ENCODE measurements at regions of chr2 and their contacts with region 1.

Region 1: DNA sequence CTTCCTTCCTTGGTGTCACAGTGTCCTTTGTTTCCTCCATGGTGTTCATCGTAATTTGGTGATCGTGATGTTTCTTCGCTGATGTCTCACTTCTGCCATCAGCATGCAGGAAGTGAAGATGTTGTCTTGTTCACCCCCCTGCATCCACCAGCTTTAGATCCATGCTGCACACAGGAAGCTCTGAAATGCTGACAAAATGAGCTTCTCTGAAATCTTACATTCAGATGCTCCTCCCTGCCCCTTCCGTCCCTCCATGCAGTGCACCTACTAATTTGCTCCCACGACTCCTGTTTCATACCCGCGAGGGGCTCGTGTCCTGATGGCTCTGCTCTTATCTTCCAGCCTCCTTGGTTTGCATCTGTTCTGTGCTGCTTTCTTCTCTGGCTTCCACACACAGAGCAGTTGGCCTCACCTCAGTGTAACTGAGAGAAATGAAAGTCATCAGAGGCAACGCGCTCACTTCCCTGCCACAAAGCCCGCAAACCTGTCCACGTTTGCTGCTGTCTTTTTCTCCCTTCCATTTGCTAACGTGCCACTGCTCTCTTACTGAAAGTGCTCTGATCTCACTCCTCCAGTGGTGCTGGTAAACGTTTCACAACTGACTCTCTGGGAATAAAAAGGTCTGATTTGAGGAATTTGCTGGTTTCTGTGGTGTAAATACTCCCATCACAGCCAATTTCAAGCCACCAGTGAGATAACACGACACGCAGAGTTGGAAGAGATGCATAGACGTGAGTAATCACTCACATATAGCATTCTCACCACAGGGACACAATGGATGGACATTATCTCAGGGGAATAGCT is 41.0 kb upstream of the MGAT4A start:
- DNase-seq: peak; percentile 82 to 92 (median 89)
- H3K4me3 ChIP-seq: peak overlapping the region; percentile 31 to 57
- H3K4me3 Mint-ChIP-seq: peak overlapping the region; percentile 92 to 99 (median 94)
- H3K27ac ChIP-seq: peak overlapping the region; percentile 63
- H3K27ac Mint-ChIP-seq: peak overlapping the region; percentile 89 to 100 (median 98)
- H3K4me1 ChIP-seq: peaks cover 79% of the 10 kb centered on the region
- H3K4me1 Mint-ChIP-seq: peaks cover 60 to 93% (median 76%) of the 10 kb centered on the region in 4 donors
- H3K27me3 ChIP-seq: no peaks in the 10 kb centered on the region
- H3K27me3 Mint-ChIP-seq: no peaks in the 10 kb centered on the region

Region 2: DNA sequence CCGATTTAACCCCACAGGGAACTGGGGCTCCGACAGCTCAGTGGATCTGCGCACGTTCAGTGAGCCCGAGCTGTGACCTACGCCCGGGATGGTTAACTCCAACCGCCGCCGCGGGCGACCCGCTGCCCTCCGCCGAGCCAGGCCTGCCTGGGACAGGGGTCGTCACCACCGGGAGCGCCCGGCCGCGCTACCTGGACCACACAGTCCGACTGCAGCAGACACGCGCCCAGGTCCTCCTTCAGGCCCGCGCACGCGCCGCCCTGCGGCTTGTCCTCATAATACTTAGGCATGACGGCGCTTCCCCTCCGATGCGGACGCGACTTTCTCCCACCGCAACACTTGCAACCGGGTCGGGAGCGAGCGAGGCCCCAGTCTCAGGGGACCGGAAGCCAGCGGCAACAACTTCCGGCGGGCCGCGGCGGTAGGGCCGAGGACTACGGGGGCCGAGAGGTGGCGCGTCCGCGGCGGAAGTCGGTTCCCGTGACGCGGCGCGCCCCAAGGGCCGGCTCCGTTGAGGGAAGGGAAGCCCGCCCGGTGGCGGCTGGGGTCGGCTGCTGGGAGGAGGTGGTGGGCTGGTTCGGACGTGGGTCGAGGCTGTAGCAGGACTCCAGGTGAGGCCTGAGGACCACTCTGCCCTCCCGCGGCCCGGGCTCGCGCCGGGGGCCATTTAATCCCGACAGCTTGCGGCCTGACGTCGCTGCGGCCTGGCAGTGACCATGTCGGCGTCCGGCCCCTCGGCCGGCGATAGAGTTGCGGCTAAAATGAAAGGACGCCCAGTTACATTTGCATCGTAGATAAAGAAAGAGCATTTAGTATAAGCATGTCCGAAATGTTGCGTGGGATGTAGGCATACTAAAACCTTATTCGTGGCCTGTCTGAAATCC is 163.6 kb before region 1 on chr2 and contains the starts of genes COA5 and UNC50:
- CTCF ChIA-PET with region 1: no interaction called
- POLR2A ChIA-PET with region 1: interaction called, 8 read pairs
- intact Hi-C with region 1: loop called (anchors 1 kb)
- DNase-seq: peak; percentile 87 to 91 (median 88)
- H3K4me3 ChIP-seq: peak within 1 kb of the TSS; percentile 86 to 93
- H3K4me3 Mint-ChIP-seq: peak within 1 kb of the TSS; percentile 79 to 95 (median 89)
- H3K27ac ChIP-seq: peak within 1 kb of the TSS; percentile 88
- H3K27ac Mint-ChIP-seq: peak within 1 kb of the TSS; percentile 89 to 97 (median 91)
- H3K4me1 ChIP-seq: peaks cover 61% of the 10 kb centered on the region
- H3K4me1 Mint-ChIP-seq: peaks cover 51 to 91% (median 59%) of the 10 kb centered on the region in 4 donors
- H3K27me3 ChIP-seq: no peaks in the 10 kb centered on the region
- H3K27me3 Mint-ChIP-seq: no peaks in the 10 kb centered on the region
- total RNA-seq, gene COA5: 51.3 to 52.4 TPM
- total RNA-seq, gene UNC50: 43.5 to 47.2 TPM

Region 3: GRCh38 chr2:98664327-98664726 is 107.6 kb before region 1 on chr2:
- CTCF ChIA-PET with region 1: interaction called, 7 read pairs
- POLR2A ChIA-PET with region 1: interaction called, 173 read pairs
- intact Hi-C with region 1: loop called (anchors 1 kb)
- DNase-seq: peak; percentile 71 to 81 (median 78)
- H3K4me3 ChIP-seq: peak overlapping the region in 1 of 2 donors; percentile 54
- H3K4me3 Mint-ChIP-seq: peak overlapping the region; percentile 59 to 91 (median 84)
- H3K27ac ChIP-seq: peak overlapping the region; percentile 51
- H3K27ac Mint-ChIP-seq: peak overlapping the region; percentile 85 to 99 (median 92)
- H3K4me1 ChIP-seq: peaks cover 74% of the 10 kb centered on the region
- H3K4me1 Mint-ChIP-seq: peaks cover 52 to 91% (median 69%) of the 10 kb centered on the region in 4 donors
- H3K27me3 ChIP-seq: no peaks in the 10 kb centered on the region
- H3K27me3 Mint-ChIP-seq: no peaks in the 10 kb centered on the region

Region 4: DNA sequence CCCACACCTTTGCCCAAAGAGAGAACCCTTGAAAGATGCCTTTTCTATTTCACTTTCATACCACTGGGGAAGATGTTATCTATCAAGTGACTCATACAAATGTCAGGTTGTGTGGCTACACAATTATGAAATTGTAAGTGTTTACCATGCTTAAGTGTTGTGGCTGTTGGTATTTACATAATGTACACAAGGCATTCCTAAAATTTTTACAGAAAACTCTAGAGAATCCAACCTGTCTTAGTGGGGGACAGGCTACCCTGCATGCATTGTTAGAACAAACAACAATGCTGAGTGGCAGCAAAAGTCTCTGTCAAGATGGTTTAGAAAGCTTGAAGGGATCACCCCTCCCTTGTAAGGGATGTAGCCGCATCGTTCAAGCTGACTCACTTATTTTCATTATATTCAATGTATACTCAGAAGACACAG is 35.4 kb before region 1 on chr2:
- CTCF ChIA-PET with region 1: interaction called, 51 read pairs
- POLR2A ChIA-PET with region 1: interaction called, 565 read pairs
- intact Hi-C with region 1: loop called (anchors 1 kb)
- DNase-seq: peak in 3 of 5 donors; percentile 41 to 65 (median 53)
- H3K4me3 ChIP-seq: no peak overlapping the region
- H3K4me3 Mint-ChIP-seq: peak overlapping the region; percentile 11 to 81 (median 62)
- H3K27ac ChIP-seq: peak overlapping the region; percentile 7
- H3K27ac Mint-ChIP-seq: peak overlapping the region; percentile 74 to 90 (median 85)
- H3K4me1 ChIP-seq: peaks cover 72% of the 10 kb centered on the region
- H3K4me1 Mint-ChIP-seq: peaks cover 57 to 92% (median 69%) of the 10 kb centered on the region in 4 donors
- H3K27me3 ChIP-seq: no peaks in the 10 kb centered on the region
- H3K27me3 Mint-ChIP-seq: no peaks in the 10 kb centered on the region

Region 5: GRCh38 chr2:98782570-98782969 is 10.6 kb after region 1 on chr2:
- CTCF ChIA-PET with region 1: interaction called, 4 read pairs
- POLR2A ChIA-PET with region 1: interaction called, 22 read pairs
- intact Hi-C with region 1: no loop called
- DNase-seq: no peak
- H3K4me3 ChIP-seq: no peak overlapping the region
- H3K4me3 Mint-ChIP-seq: no peak overlapping the region
- H3K27ac ChIP-seq: no peak overlapping the region
- H3K27ac Mint-ChIP-seq: peak overlapping the region in 2 of 7 donors; percentile 5 to 16
- H3K4me1 ChIP-seq: no peaks in the 10 kb centered on the region
- H3K4me1 Mint-ChIP-seq: peaks cover 0 to 3% (median under 1%) of the 10 kb centered on the region in 4 donors
- H3K27me3 ChIP-seq: no peaks in the 10 kb centered on the region
- H3K27me3 Mint-ChIP-seq: no peaks in the 10 kb centered on the region

Region 6: GRCh38 chr2:98828793-98829371 is 57.0 kb after region 1 on chr2:
- CTCF ChIA-PET with region 1: interaction called, 30 read pairs
- POLR2A ChIA-PET with region 1: interaction called, 55 read pairs
- intact Hi-C with region 1: no loop called
- DNase-seq: peak; percentile 40 to 61 (median 49)
- H3K4me3 ChIP-seq: peak overlapping the region; percentile 15 to 19
- H3K4me3 Mint-ChIP-seq: peak overlapping the region; percentile 49 to 75 (median 70)
- H3K27ac ChIP-seq: peak overlapping the region; percentile 44
- H3K27ac Mint-ChIP-seq: peak overlapping the region; percentile 76 to 94 (median 93)
- H3K4me1 ChIP-seq: peaks cover 61% of the 10 kb centered on the region
- H3K4me1 Mint-ChIP-seq: peaks cover 54 to 97% (median 78%) of the 10 kb centered on the region in 4 donors
- H3K27me3 ChIP-seq: no peaks in the 10 kb centered on the region
- H3K27me3 Mint-ChIP-seq: no peaks in the 10 kb centered on the region